ENCODE measurements at regions of chr2 and their contacts with region 1.

Region 1: GRCh38 chr2:241289597-241289996 is 25.9 kb downstream of the HDLBP start:
- DNase-seq: no peak
- ATAC-seq: peak in 2 of 4 donors; percentile 34 to 44
- H3K4me3 ChIP-seq: no peak overlapping the region
- H3K27ac ChIP-seq: no peak overlapping the region
- H3K4me1 ChIP-seq: peaks cover 0 to 39% (median 15%) of the 10 kb centered on the region in 12 donors
- H3K27me3 ChIP-seq: no peaks in the 10 kb centered on the region
- CTCF ChIP-seq: no peak
- POLR2A ChIP-seq: no peak

Region 2: DNA sequence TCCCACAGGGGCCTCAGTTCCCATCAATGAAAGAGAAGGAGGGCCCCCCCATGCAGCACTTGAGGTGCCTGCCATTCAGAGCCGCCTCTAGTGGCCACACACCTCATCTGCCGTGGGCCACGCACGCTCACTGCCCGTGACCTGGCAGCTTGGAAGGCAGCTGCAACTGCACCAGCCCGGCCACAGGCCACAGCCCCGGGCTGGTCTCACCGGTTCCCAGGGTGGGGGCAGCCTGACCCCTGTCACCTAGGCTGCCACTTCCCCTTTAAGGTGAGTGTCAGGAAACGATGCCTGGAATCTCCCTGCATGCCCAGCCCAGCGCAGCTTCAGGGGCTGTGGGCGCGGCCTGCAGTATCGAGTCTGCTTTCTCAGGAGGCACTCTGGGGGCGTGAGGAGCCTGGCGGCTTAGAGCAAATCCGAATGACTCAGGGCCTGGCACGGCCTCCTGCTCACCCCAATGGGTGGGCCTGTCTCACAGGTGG is 396.2 kb before region 1 on chr2:
- intact Hi-C with region 1: no loop called
- DNase-seq: peak in 1 of 5 donors; percentile 10
- ATAC-seq: no peak
- H3K4me3 ChIP-seq: no peak overlapping the region
- H3K27ac ChIP-seq: no peak overlapping the region
- H3K4me1 ChIP-seq: peaks cover 0 to 15% (median 8%) of the 10 kb centered on the region in 12 donors
- H3K27me3 ChIP-seq: no peaks in the 10 kb centered on the region
- CTCF ChIP-seq: no peak
- POLR2A ChIP-seq: no peak

Region 3: GRCh38 chr2:241302759-241303651 is 13.4 kb after region 1 on chr2:
- intact Hi-C with region 1: loop called in 1 of 10 experiments (anchors 2 kb)
- DNase-seq: peak in 1 of 5 donors; percentile 32
- ATAC-seq: peak; percentile 48 to 77 (median 58)
- H3K4me3 ChIP-seq: no peak overlapping the region
- H3K27ac ChIP-seq: peak overlapping the region in 10 of 12 donors; percentile 13 to 71 (median 31)
- H3K4me1 ChIP-seq: peaks cover 0 to 65% (median 36%) of the 10 kb centered on the region in 12 donors
- H3K27me3 ChIP-seq: no peaks in the 10 kb centered on the region
- CTCF ChIP-seq: no peak
- POLR2A ChIP-seq: no peak